Sigmoid colon (tissue), 7 donors: ENCODE measurements at regions of chr3 and their contacts with region 1.

Region 1: DNA sequence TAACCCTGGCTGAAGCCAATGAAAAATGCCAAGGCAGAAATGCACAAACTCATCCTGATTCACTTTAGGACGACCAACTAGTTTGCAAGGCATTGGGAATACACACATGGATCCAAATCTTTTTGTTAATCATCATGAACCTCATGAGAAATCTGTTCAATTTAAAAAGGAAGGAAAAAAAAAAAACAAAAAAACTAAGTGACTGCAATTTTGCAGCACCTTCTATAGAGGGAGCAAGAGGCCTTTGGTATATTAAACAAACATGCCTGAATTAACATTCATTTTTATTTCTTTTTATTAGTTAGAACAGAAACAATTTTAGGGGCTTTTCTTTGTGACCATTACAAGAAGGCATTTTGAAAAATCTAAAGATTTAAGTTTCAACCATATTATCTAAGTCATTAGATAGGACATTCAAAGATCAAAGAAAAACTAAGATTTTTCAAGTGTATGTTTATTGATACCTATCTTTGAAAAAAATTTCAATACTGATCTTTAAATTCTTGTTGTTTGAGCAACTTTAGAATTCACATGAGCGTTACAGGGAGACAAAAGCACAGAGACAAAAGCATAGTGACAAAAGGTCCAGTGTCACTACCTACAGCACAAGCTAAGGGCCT is 182.4 kb downstream of the CBLB start:
- DNase-seq: no peak
- H3K4me3 ChIP-seq: no peak overlapping the region
- H3K27ac ChIP-seq: no peak overlapping the region
- H3K4me1 ChIP-seq: peaks cover 0 to 4% (median 0%) of the 10 kb centered on the region in 4 donors
- H3K27me3 ChIP-seq: no peaks in the 10 kb centered on the region
- CTCF ChIP-seq: peak; percentile 14 to 71 (median 40)
- EP300 ChIP-seq: no peak
- POLR2A ChIP-seq: no peak

Region 2: GRCh38 chr3:105823149-105823869 is 136.9 kb after region 1 on chr3:
- intact Hi-C with region 1: no loop called
- DNase-seq: no peak
- H3K4me3 ChIP-seq: no peak overlapping the region
- H3K27ac ChIP-seq: peak overlapping the region; percentile 32 to 62 (median 42)
- H3K4me1 ChIP-seq: peaks cover 0 to 38% (median 22%) of the 10 kb centered on the region in 4 donors
- H3K27me3 ChIP-seq: no peaks in the 10 kb centered on the region
- CTCF ChIP-seq: no peak
- EP300 ChIP-seq: no peak
- POLR2A ChIP-seq: no peak

Region 3: DNA sequence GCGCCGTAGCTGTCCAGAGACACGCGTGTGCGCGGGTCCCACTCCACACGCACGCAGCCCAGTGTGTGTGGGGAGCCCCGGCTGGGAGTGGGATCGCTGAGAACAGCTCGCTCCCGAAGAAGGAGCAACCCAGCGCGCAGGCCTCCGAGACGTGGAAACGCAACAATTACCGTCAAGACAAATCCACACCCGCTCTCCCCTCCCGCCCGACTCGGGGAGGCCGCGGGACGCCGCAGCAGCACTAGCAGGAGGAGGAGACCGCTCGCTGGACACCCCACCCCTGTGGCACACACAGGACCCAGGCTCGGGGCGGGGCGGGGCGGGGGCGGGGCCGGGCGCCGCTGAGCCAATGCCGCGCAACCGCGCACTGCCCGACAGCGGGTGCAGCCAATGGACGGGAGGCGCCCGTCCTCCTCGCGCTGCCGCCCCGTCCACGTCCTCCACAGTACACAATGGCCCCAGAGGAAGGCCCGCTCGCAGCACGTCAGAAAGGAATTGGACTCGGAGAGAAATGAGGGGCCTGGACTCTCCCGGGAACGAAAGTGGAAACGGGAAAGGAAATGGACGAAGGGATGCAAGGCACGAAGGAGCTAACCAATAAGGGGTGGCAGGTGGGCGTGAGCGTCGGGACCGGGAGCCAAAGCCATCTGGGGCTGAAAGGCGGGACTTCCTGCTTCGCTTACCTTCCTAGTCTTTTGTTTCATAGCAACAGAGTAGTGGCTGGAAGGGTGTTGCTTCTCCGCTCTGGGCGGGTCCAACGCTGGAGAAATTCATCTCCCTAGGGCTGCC is 182.5 kb after region 1 on chr3 and contains the start of gene CBLB:
- intact Hi-C with region 1: loop called (anchors 5 kb)
- DNase-seq: peak; percentile 97
- H3K4me3 ChIP-seq: peak within 1 kb of the TSS; percentile 76 to 97 (median 97)
- H3K27ac ChIP-seq: peak within 1 kb of the TSS; percentile 94 to 99 (median 98)
- H3K4me1 ChIP-seq: peaks cover 0 to 48% (median 33%) of the 10 kb centered on the region in 4 donors
- H3K27me3 ChIP-seq: no peaks in the 10 kb centered on the region
- CTCF ChIP-seq: no peak
- EP300 ChIP-seq: no peak
- POLR2A ChIP-seq: peak; percentile 74 to 81
- total RNA-seq, gene CBLB: 27.4 to 55.9 (median 48.3) TPM

Region 4: GRCh38 chr3:106609666-106610301 is 923.4 kb after region 1 on chr3:
- intact Hi-C with region 1: loop called (anchors 1 kb)
- DNase-seq: peak; percentile 71
- H3K4me3 ChIP-seq: no peak overlapping the region
- H3K27ac ChIP-seq: no peak overlapping the region
- H3K4me1 ChIP-seq: peaks cover 0 to 4% (median 0%) of the 10 kb centered on the region in 4 donors
- H3K27me3 ChIP-seq: no peaks in the 10 kb centered on the region
- CTCF ChIP-seq: peak; percentile 33 to 84 (median 72)
- EP300 ChIP-seq: no peak
- POLR2A ChIP-seq: no peak